ENCODE measurements at regions of chr11 and their contacts with region 1.

Region 1: DNA sequence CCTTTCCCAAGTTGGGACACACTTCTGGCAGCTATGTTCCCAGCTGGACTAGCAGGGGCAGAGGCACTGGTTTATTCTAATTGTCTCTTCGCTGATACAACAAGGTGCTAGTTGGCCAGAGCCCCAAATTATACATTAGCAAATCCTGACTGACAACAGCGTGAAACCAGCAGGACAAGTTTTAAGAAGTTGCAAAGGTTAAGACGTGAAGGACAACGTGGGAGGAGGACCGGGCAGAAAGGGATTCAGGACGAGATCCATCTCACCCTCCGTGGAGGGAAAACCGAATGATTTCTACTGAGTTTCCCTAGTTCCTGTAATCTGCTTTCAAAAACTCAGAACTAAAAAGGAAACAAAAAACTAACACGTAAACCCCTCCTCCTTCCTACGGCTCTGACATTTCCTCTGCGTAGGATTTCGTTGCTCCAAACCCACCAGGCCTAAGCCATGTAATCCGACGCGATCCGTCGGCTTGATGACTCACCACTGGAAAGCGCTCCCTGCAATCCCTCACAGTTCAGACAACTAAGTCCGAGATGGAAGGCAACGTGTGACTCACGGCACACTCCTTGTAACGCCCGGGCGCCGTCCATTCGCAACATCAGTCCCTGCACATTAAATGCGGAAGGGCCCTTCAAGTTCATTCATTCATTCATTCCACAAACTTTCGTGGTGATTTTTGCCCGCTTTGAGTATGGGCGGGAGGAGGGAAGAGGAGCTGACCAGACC is 703 bp downstream of the POGLUT3 start:
- DNase-seq: peak; percentile 93
- ATAC-seq: peak; percentile 89
- H3K4me3 ChIP-seq: peak overlapping the region; percentile 46 to 65
- H3K27ac ChIP-seq: peak overlapping the region; percentile 97
- H3K4me1 ChIP-seq: peaks cover 12 to 32% of the 10 kb centered on the region in 2 experiments; a peak in 3 of 4 replicates
- H3K27me3 ChIP-seq: no peaks in the 10 kb centered on the region
- CTCF ChIP-seq: no peak
- POLR2A ChIP-seq: peak; percentile 95
- RAD21 ChIP-seq: peak; percentile 2; the same call in 1 of the 2 replicates

Region 2: GRCh38 chr11:108467091-108467823 is 30.2 kb before region 1 on chr11 and contains the start of gene C11orf65:
- CTCF ChIA-PET with region 1: no interaction called
- POLR2A ChIA-PET with region 1: no interaction called
- RAD21 ChIA-PET with region 1: no interaction called
- intact Hi-C with region 1: loop called (anchors 2 kb)
- DNase-seq: peak; percentile 96
- ATAC-seq: peak; percentile 99
- H3K4me3 ChIP-seq: peak within 1 kb of the TSS; percentile 60 to 88
- H3K27ac ChIP-seq: peak within 1 kb of the TSS; percentile 86
- H3K4me1 ChIP-seq: peaks cover 5 to 14% of the 10 kb centered on the region in 2 experiments; a peak in 3 of 4 replicates
- H3K27me3 ChIP-seq: no peaks in the 10 kb centered on the region
- CTCF ChIP-seq: no peak
- POLR2A ChIP-seq: peak; percentile 93
- RAD21 ChIP-seq: no peak
- total RNA-seq, gene C11orf65: 1.3 TPM

Region 3: DNA sequence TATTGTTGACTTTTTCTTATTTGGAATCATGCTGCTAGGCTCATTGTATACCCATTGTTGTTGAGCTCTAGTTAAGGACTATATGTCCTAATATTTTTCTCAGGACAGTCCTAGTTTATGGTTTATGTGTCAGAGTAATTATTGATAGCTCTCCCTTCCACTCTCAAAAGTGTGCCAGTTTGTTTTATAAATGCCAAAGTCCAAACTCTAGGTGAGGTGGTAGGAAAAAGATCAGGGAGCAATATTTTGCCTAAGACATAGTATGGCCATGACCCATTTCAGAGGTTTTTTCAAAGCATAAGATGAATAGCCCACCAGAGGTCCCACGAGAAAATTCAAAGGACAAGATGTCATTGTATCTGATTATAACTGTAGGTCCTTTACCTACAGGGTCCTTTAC is 146.5 kb after region 1 on chr11:
- CTCF ChIA-PET with region 1: no interaction called
- POLR2A ChIA-PET with region 1: no interaction called
- RAD21 ChIA-PET with region 1: no interaction called
- intact Hi-C with region 1: no loop called
- DNase-seq: no peak
- ATAC-seq: no peak
- H3K4me3 ChIP-seq: no peak overlapping the region
- H3K27ac ChIP-seq: no peak overlapping the region
- H3K4me1 ChIP-seq: peaks cover 0 to 4% of the 10 kb centered on the region in 2 experiments; a peak in 2 of 4 replicates
- H3K27me3 ChIP-seq: no peaks in the 10 kb centered on the region
- CTCF ChIP-seq: no peak
- POLR2A ChIP-seq: no peak
- RAD21 ChIP-seq: no peak

Measured in HCT116 (cell line).